CD4-positive, alpha-beta memory T cell (primary cell): ENCODE measurements at regions of chr5 and their contacts with region 1.

Region 1: GRCh38 chr5:128674825-128675446 is 136.9 kb upstream of the FBN2 start:
- DNase-seq: peak in 3 of 5 donors; percentile 5 to 16 (median 10)
- H3K4me3 ChIP-seq: no peak overlapping the region
- H3K4me3 Mint-ChIP-seq: no peak overlapping the region
- H3K27ac ChIP-seq: no peak overlapping the region
- H3K27ac Mint-ChIP-seq: no peak overlapping the region
- H3K4me1 ChIP-seq: no peaks in the 10 kb centered on the region
- H3K4me1 Mint-ChIP-seq: no peaks in the 10 kb centered on the region
- H3K27me3 ChIP-seq: no peaks in the 10 kb centered on the region
- H3K27me3 Mint-ChIP-seq: peaks cover 0 to 2% of the 10 kb centered on the region in 2 donors

Region 2: DNA sequence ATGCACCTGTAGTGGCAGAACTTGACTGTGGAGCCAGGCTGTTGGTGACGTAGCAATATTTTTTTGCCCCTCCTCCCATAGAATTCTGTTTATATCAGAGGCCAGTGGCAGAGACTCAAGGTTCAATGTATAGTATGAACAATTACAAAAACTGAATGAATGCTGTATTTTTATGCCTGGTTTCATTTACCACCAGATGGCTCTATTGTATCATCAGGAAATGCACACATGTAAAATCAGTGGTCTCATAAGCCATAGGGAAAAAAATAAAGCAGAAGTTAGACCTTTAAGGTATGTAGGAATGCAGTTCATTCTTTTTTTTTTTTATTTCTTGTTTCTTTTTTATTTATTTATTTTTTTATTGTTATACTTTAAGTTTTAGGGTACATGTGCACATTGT is 928.2 kb before region 1 on chr5:
- CTCF ChIA-PET with region 1: no interaction called
- POLR2A ChIA-PET with region 1: no interaction called
- intact Hi-C with region 1: loop called (anchors 10 kb)
- DNase-seq: peak in 3 of 5 donors; percentile 7 to 16 (median 13)
- H3K4me3 ChIP-seq: no peak overlapping the region
- H3K4me3 Mint-ChIP-seq: no peak overlapping the region
- H3K27ac ChIP-seq: no peak overlapping the region
- H3K27ac Mint-ChIP-seq: no peak overlapping the region
- H3K4me1 ChIP-seq: no peaks in the 10 kb centered on the region
- H3K4me1 Mint-ChIP-seq: no peaks in the 10 kb centered on the region
- H3K27me3 ChIP-seq: no peaks in the 10 kb centered on the region
- H3K27me3 Mint-ChIP-seq: peaks cover 5 to 8% of the 10 kb centered on the region in 2 donors

Region 3: DNA sequence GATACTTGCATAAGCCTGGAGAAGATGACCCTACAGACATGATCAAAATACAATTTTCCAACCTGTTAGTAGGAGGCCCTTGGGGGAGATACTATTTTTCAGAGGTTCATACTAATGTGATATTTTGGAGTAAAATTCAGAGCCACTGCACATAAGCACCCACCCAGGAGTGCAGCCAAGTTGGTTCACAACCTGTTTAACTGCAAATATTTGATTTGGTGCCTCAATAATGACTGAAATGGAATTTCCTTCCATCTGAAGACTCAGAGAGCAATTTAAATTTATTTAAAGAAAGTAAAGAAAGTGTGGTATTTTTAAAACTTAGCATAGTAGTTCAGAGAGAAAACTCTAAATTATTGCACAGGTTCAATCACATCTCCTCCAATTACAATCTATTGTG is 59.4 kb before region 1 on chr5:
- CTCF ChIA-PET with region 1: no interaction called
- POLR2A ChIA-PET with region 1: no interaction called
- intact Hi-C with region 1: no loop called
- DNase-seq: no peak
- H3K4me3 ChIP-seq: no peak overlapping the region
- H3K4me3 Mint-ChIP-seq: no peak overlapping the region
- H3K27ac ChIP-seq: no peak overlapping the region
- H3K27ac Mint-ChIP-seq: no peak overlapping the region
- H3K4me1 ChIP-seq: no peaks in the 10 kb centered on the region
- H3K4me1 Mint-ChIP-seq: no peaks in the 10 kb centered on the region
- H3K27me3 ChIP-seq: no peaks in the 10 kb centered on the region
- H3K27me3 Mint-ChIP-seq: no peaks in the 10 kb centered on the region

Region 4: DNA sequence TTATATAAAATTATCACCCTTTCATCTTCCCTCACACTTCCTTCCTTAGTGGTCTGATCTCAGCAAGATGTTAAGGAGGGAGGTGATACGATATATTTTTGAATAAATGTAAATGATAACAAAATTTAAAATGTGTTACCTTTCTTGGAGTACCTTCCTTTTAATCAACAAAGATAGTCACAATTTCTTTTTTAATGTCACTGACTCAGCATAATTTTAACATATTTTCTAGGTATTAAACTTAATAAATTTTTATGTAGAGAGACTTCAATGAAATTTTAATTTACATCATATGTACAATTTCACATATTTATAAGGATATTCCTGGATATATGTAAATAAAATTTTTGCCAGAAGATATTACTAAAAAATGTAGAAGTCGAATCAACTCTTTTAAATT is 11.9 kb before region 1 on chr5:
- CTCF ChIA-PET with region 1: no interaction called
- POLR2A ChIA-PET with region 1: no interaction called
- intact Hi-C with region 1: no loop called
- DNase-seq: no peak
- H3K4me3 ChIP-seq: no peak overlapping the region
- H3K4me3 Mint-ChIP-seq: no peak overlapping the region
- H3K27ac ChIP-seq: no peak overlapping the region
- H3K27ac Mint-ChIP-seq: no peak overlapping the region
- H3K4me1 ChIP-seq: no peaks in the 10 kb centered on the region
- H3K4me1 Mint-ChIP-seq: no peaks in the 10 kb centered on the region
- H3K27me3 ChIP-seq: no peaks in the 10 kb centered on the region
- H3K27me3 Mint-ChIP-seq: peaks cover 0 to 3% of the 10 kb centered on the region in 2 donors